Common myeloid progenitor, CD34-positive (primary cell): ENCODE measurements at regions of chr19 and their contacts with region 1.

Region 1: DNA sequence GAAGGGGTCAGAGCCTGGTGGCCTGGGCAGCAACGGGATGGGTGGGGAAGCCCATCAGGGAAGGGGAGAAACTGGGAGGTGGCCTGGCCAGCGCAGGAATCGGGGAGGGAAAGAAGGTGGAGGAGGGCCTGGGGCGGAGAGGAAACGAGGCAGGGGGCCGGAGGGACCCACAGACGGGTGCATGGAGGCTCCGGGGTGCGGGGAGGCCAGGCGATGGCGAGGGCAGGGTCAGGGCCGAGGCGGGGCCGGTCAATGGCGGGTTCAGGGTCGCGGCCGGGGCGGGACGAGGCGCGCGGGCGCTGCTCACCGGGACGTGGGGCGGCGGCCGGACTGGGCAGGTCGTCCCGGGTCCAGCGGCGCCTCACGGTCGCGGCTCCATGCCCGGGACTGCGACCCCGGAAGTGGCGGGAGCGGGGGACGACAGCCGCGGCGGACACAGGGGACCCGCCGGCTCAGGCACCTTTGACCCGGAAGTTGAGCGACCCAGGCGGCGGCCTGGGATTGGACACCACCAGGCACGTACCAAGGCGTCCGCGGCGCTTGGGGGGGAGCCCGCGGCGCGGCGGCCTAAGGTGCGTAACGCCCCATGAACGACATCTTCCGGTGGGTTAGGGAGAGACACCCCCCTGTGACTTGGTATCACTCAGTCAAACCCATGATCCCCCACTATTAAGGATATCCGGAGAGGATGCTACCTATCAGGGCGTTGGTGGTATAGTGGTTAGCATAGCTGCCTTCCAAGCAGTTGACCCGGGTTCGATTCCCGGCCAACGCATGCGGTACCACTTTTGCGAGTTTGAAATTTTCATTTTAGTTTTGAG is at the start of gene DPP9:
- DNase-seq: peak; percentile 99 to 100 (median 99)
- H3K4me3 ChIP-seq: peak within 1 kb of the TSS; percentile 75 to 99 (median 92)
- H3K27ac ChIP-seq: peak within 1 kb of the TSS; percentile 72 to 88
- H3K4me1 ChIP-seq: peaks cover 0 to 22% (median 19%) of the 10 kb centered on the region in 4 experiments
- H3K27me3 ChIP-seq: no peaks in the 10 kb centered on the region

Region 2: GRCh38 chr19:4759388-4760284 is 36.1 kb after region 1 on chr19:
- CTCF ChIA-PET with region 1: no interaction called
- POLR2A ChIA-PET with region 1: no interaction called
- DNase-seq: peak; percentile 85 to 90 (median 89)
- H3K4me3 ChIP-seq: peak overlapping the region in 6 of 7 experiments; percentile 23 to 62 (median 49)
- H3K27ac ChIP-seq: no peak overlapping the region
- H3K4me1 ChIP-seq: peaks cover 0 to 13% (median 11%) of the 10 kb centered on the region in 4 experiments
- H3K27me3 ChIP-seq: peaks cover 0 to 42% (median 6%) of the 10 kb centered on the region in 5 experiments

Region 3: GRCh38 chr19:4791170-4792018 is 67.8 kb after region 1 on chr19 and contains the start of gene FEM1A:
- CTCF ChIA-PET with region 1: interaction called, 14 read pairs
- POLR2A ChIA-PET with region 1: interaction called, 5 read pairs
- DNase-seq: peak; percentile 100
- H3K4me3 ChIP-seq: peak within 1 kb of the TSS; percentile 64 to 90 (median 83)
- H3K27ac ChIP-seq: peak within 1 kb of the TSS; percentile 89 to 96
- H3K4me1 ChIP-seq: peaks cover 0 to 26% (median 16%) of the 10 kb centered on the region in 4 experiments
- H3K27me3 ChIP-seq: peaks cover 0 to 3% (median 2%) of the 10 kb centered on the region in 5 experiments